ENCODE measurements at regions of chr4 and their contacts with region 1.

Region 1: DNA sequence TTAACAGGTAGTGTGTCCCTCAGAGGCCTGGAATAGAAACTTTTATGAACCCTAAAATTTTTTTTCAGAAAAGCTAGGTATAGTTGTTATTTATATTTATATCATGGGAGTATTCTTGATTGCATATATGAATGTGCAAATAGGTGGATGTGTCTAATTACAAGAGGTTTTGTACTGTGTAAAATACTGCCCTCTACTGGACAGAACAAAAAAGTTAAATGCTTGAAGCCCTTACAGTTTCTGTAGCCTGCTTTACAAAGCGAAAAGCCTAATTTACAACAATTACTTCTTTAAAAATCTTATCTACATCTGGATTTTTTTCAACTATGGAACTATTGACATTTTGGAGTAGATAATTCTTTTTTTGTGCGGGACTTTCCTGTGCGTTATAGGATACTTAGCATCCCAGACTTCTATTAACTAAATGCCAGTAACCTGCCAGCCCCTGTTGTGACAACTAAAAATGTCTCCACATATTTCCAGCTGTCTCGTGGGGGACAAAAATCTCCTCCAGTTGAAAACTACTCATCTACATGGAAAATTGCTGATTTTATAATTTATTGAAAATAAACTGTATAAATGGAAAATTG is 35.1 kb downstream of the ENPEP start:
- DNase-seq: no peak
- ATAC-seq: peak in 5 of 8 donors; percentile 50 to 78 (median 66)
- H3K4me3 ChIP-seq: no peak overlapping the region
- H3K27ac ChIP-seq: no peak overlapping the region
- H3K4me1 ChIP-seq: peaks cover 0 to 11% (median 0%) of the 10 kb centered on the region in 9 donors
- H3K27me3 ChIP-seq: no peaks in the 10 kb centered on the region
- CTCF ChIP-seq: peak; percentile 63 to 86 (median 74)

Region 2: DNA sequence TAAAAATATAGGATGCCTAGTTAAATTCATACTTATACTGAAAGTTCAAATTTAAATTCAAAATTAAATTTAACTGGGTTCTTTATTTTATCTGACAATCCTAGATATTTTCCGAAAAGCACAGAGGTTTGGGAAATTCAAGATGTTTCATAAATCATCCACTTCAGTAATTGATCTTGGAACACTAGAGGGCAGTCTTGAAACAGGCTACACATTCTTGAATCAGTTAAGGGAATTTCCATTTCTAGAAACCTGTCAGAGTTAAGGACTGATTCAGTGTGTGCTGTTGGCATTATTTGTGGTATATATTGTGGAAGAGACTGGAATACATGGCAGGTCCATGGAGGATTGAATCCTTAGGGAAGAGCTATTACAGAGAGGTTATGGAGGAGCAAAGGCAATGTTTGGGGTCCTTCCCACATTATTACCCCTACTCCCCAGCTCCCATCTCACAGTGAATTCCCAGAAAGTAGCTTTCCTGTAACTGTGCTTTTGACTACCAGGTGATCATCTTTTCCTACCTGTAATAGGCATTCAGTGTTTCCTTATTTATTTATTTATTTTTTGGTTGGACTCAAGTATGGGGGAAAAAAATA is 505.5 kb before region 1 on chr4:
- intact Hi-C with region 1: loop called in 8 of 10 experiments (anchors 2 to 5 kb)
- DNase-seq: no peak
- ATAC-seq: peak in 1 of 8 donors; percentile 29
- H3K4me3 ChIP-seq: no peak overlapping the region
- H3K27ac ChIP-seq: no peak overlapping the region
- H3K4me1 ChIP-seq: no peaks in the 10 kb centered on the region
- H3K27me3 ChIP-seq: no peaks in the 10 kb centered on the region
- CTCF ChIP-seq: peak; percentile 26 to 79 (median 73)

Region 3: DNA sequence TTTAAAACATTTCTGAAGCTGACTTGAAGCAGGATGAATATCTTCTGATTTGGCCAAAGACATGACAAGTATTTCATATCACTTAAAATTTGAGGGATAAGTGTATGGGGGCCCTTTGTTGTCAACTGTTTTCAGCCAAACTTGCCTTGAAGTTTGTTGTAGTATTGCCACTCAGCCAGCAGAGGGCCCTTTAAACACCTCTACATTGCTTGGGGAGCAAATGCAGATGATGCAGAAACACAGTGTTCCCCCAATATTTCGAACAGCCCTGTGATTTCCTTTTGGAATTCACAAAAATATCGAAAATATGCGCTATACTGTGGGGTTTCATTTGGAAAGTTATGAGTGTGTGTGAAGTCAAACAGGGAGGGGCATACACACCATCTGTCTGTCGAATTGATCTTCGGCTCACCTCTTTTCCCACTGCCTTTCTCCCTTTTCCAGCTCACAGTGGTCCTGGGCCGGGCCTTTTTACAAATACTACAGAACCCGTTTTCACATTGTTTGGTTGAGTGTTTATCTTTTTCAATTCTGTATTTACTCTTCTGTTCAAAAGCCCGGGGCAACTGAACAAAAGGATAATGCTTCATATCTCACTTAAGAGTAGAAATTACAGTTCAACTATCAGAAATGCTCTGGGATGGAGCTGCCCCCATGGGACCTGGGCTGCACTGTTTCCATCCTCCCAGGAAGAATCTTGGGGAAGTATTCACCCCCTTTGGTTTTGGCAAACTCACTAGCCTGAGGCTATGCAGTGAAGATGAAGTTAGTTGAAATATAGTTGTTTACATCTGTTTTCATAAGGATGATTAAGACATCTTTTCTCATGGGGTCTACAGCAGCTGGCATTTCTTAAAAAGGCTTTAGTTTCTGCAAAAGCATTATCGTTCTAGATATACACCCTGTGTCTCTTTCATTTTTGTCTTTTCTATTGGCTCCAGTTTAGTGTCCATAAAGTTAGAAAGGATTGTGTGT is 460.8 kb before region 1 on chr4:
- intact Hi-C with region 1: loop called in 2 of 10 experiments (anchors 2 to 5 kb)
- DNase-seq: peak in 1 of 2 donors; percentile 22
- ATAC-seq: peak in 1 of 8 donors; percentile 33
- H3K4me3 ChIP-seq: no peak overlapping the region
- H3K27ac ChIP-seq: no peak overlapping the region
- H3K4me1 ChIP-seq: no peaks in the 10 kb centered on the region
- H3K27me3 ChIP-seq: peaks cover 0 to 5% (median 3%) of the 10 kb centered on the region in 7 donors
- CTCF ChIP-seq: peak; percentile 53 to 89 (median 79)

Region 4: DNA sequence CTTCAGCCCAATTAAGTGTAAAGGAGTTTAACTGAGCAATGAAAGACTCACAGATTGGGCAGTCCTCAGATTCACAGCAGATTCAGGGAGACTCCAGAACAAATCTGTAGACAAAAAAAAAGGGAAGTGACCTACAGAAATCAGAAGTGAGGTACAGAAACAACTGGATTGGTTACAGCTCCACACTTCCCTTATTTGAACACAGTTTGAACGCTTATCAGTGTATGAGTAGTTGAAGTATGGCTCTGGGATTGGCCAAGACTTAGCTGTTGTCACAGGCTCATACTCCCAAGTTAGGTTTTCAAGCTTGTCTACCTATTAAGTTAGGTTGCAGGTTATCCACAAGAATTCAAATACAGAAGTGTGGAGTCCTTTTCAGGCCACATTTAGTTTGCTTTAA is 200.3 kb before region 1 on chr4:
- intact Hi-C with region 1: loop called in 9 of 10 experiments (anchors 2 to 10 kb)
- DNase-seq: no peak
- ATAC-seq: no peak
- H3K4me3 ChIP-seq: no peak overlapping the region
- H3K27ac ChIP-seq: no peak overlapping the region
- H3K4me1 ChIP-seq: peaks cover 0 to 7% (median 0%) of the 10 kb centered on the region in 9 donors
- H3K27me3 ChIP-seq: no peaks in the 10 kb centered on the region
- CTCF ChIP-seq: no peak

Region 5: DNA sequence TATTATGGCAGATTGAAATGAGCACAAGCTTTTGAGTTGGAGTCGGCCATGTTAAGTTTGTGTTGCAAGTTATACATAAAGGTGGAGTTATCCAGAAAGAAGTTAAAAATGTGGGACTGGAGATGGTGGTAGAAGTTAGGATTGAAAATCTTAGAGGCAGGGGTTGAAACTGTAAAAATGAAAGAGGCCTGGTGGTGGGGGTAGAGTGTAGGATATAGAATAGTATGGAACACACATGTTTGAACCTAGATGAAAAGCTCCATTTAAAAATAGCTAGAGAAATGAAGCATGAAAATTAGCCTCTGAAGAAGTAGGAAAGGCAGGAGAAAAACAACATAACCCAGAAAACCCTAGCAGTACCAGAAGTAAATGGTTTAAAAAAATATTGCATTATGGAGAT is 166.9 kb before region 1 on chr4:
- intact Hi-C with region 1: loop called in 5 of 10 experiments (anchors 2 to 10 kb)
- DNase-seq: no peak
- ATAC-seq: peak in 1 of 8 donors; percentile 61
- H3K4me3 ChIP-seq: no peak overlapping the region
- H3K27ac ChIP-seq: no peak overlapping the region
- H3K4me1 ChIP-seq: no peaks in the 10 kb centered on the region
- H3K27me3 ChIP-seq: no peaks in the 10 kb centered on the region
- CTCF ChIP-seq: peak in 6 of 9 donors; percentile 24 to 50 (median 38)

Measured in heart right ventricle (tissue), 16 donors.